Heart right ventricle (tissue), 16 donors: ENCODE measurements at regions of chr4 and their contacts with region 1.

Region 1: GRCh38 chr4:84632092-84632491 is 49.2 kb downstream of the CDS1 start:
- DNase-seq: no peak
- ATAC-seq: no peak
- H3K4me3 ChIP-seq: no peak overlapping the region
- H3K27ac ChIP-seq: no peak overlapping the region
- H3K4me1 ChIP-seq: no peaks in the 10 kb centered on the region
- H3K27me3 ChIP-seq: no peaks in the 10 kb centered on the region
- CTCF ChIP-seq: no peak

Region 2: GRCh38 chr4:84651499-84651898 is 19.4 kb after region 1 on chr4:
- intact Hi-C with region 1: loop called in 1 of 10 experiments (anchors 2 kb)
- DNase-seq: no peak
- ATAC-seq: no peak
- H3K4me3 ChIP-seq: no peak overlapping the region
- H3K27ac ChIP-seq: no peak overlapping the region
- H3K4me1 ChIP-seq: no peaks in the 10 kb centered on the region
- H3K27me3 ChIP-seq: no peaks in the 10 kb centered on the region
- CTCF ChIP-seq: no peak